Activated naive CD4-positive, alpha-beta T cell treated with anti-CD3 and anti-CD28 coated beads, Interleukin-2, amount 10 ng/mL, durations not matched to agents 7 days and 5 days (primary cell): ENCODE measurements at regions of chr16 and their contacts with region 1.

Region 1: GRCh38 chr16:71499775-71500364 is 10.7 kb upstream of the ZNF19 start:
- DNase-seq: peak; percentile 67
- H3K4me3 Mint-ChIP-seq: no peak overlapping the region
- H3K27ac Mint-ChIP-seq: no peak overlapping the region
- H3K4me1 Mint-ChIP-seq: no peaks in the 10 kb centered on the region
- H3K27me3 Mint-ChIP-seq: no peaks in the 10 kb centered on the region

Region 2: GRCh38 chr16:71412270-71413160 is 87.4 kb before region 1 on chr16:
- CTCF ChIA-PET with region 1: interaction called, 85 read pairs
- DNase-seq: peak; percentile 73
- H3K4me3 Mint-ChIP-seq: no peak overlapping the region
- H3K27ac Mint-ChIP-seq: no peak overlapping the region
- H3K4me1 Mint-ChIP-seq: peaks cover 3% of the 10 kb centered on the region
- H3K27me3 Mint-ChIP-seq: peaks cover 43% of the 10 kb centered on the region

Region 3: DNA sequence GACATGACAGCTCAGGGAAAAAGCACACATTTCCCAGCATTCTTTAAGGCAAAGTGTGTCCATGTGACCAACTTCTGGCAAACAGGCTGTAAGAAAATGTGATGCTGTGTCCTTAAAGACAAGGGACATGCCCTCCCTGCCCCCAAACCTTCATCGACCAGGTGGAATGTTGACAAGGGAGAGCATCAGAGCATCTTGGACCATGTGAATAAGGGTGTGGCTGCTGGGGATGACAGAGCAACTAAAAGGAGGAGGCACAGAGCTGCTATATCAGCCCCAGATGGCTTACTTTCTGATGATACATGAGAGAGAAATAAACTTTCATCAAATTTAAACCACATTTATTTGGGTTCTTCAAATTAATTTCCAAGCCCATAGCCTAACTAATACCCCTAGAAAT is 35.6 kb before region 1 on chr16:
- CTCF ChIA-PET with region 1: interaction called, 12 read pairs
- DNase-seq: no peak
- H3K4me3 Mint-ChIP-seq: no peak overlapping the region
- H3K27ac Mint-ChIP-seq: no peak overlapping the region
- H3K4me1 Mint-ChIP-seq: peaks cover 29% of the 10 kb centered on the region
- H3K27me3 Mint-ChIP-seq: no peaks in the 10 kb centered on the region